Naive thymus-derived CD4-positive, alpha-beta T cell (primary cell): ENCODE measurements at regions of chr10 and their contacts with region 1.

Region 1: GRCh38 chr10:7410862-7411670 is at the start of gene SFMBT2:
- DNase-seq: peak; percentile 45 to 71 (median 64)
- ATAC-seq: peak; percentile 61
- H3K4me3 ChIP-seq: peak within 1 kb of the TSS; percentile 92
- H3K4me3 Mint-ChIP-seq: peak within 1 kb of the TSS; percentile 93 to 100 (median 99)
- H3K27ac ChIP-seq: peak within 1 kb of the TSS; percentile 76
- H3K27ac Mint-ChIP-seq: peak within 1 kb of the TSS; percentile 93 to 99 (median 95)
- H3K4me1 ChIP-seq: peaks cover 18 to 28% of the 10 kb centered on the region in 2 donors
- H3K4me1 Mint-ChIP-seq: peaks cover 14 to 49% (median 37%) of the 10 kb centered on the region in 7 donors
- H3K27me3 ChIP-seq: no peaks in the 10 kb centered on the region
- H3K27me3 Mint-ChIP-seq: peaks cover 0 to 34% (median 0%) of the 10 kb centered on the region in 5 donors
- total RNA-seq, gene SFMBT2: 38.6 to 50.9 (median 40.9) TPM

Region 2: GRCh38 chr10:6409971-6410651 is 1001.0 kb before region 1 on chr10:
- CTCF ChIA-PET with region 1: no interaction called
- POLR2A ChIA-PET with region 1: no interaction called
- intact Hi-C with region 1: loop called in 1 of 2 experiments (anchors 5 kb)
- DNase-seq: peak in 8 of 9 donors; percentile 20 to 64 (median 56)
- ATAC-seq: peak; percentile 95
- H3K4me3 ChIP-seq: peak overlapping the region; percentile 28
- H3K4me3 Mint-ChIP-seq: peak overlapping the region in 9 of 10 donors; percentile 43 to 75 (median 66)
- H3K27ac ChIP-seq: peak overlapping the region; percentile 55
- H3K27ac Mint-ChIP-seq: peak overlapping the region; percentile 83 to 97 (median 89)
- H3K4me1 ChIP-seq: peaks cover 11 to 25% of the 10 kb centered on the region in 2 donors
- H3K4me1 Mint-ChIP-seq: peaks cover 19 to 40% (median 34%) of the 10 kb centered on the region in 7 donors
- H3K27me3 ChIP-seq: no peaks in the 10 kb centered on the region
- H3K27me3 Mint-ChIP-seq: no peaks in the 10 kb centered on the region

Region 3: GRCh38 chr10:6929148-6929830 is 481.8 kb before region 1 on chr10:
- CTCF ChIA-PET with region 1: interaction called, 4 read pairs
- POLR2A ChIA-PET with region 1: no interaction called
- intact Hi-C with region 1: loop called in 1 of 2 experiments (anchors 2 kb)
- DNase-seq: no peak
- ATAC-seq: no peak
- H3K4me3 ChIP-seq: no peak overlapping the region
- H3K4me3 Mint-ChIP-seq: peak overlapping the region in 2 of 10 donors; percentile 1 to 35
- H3K27ac ChIP-seq: no peak overlapping the region
- H3K27ac Mint-ChIP-seq: peak overlapping the region in 2 of 9 donors; percentile 23 to 53
- H3K4me1 ChIP-seq: peaks cover 26 to 46% of the 10 kb centered on the region in 2 donors
- H3K4me1 Mint-ChIP-seq: peaks cover 25 to 46% (median 34%) of the 10 kb centered on the region in 7 donors
- H3K27me3 ChIP-seq: no peaks in the 10 kb centered on the region
- H3K27me3 Mint-ChIP-seq: peaks cover 0 to 10% (median 4%) of the 10 kb centered on the region in 5 donors

Region 4: GRCh38 chr10:7260412-7260900 is 150.6 kb before region 1 on chr10:
- CTCF ChIA-PET with region 1: interaction called, 6 read pairs
- POLR2A ChIA-PET with region 1: no interaction called
- intact Hi-C with region 1: loop called (anchors 1 to 2 kb)
- DNase-seq: peak in 3 of 9 donors; percentile 16 to 33 (median 31)
- ATAC-seq: peak; percentile 73
- H3K4me3 ChIP-seq: no peak overlapping the region
- H3K4me3 Mint-ChIP-seq: peak overlapping the region in 8 of 10 donors; percentile 29 to 75 (median 61)
- H3K27ac ChIP-seq: no peak overlapping the region
- H3K27ac Mint-ChIP-seq: peak overlapping the region; percentile 51 to 94 (median 86)
- H3K4me1 ChIP-seq: peaks cover 27 to 30% of the 10 kb centered on the region in 2 donors
- H3K4me1 Mint-ChIP-seq: peaks cover 42 to 64% (median 57%) of the 10 kb centered on the region in 7 donors
- H3K27me3 ChIP-seq: no peaks in the 10 kb centered on the region
- H3K27me3 Mint-ChIP-seq: no peaks in the 10 kb centered on the region

Region 5: GRCh38 chr10:7285522-7286322 is 125.3 kb before region 1 on chr10:
- CTCF ChIA-PET with region 1: no interaction called
- POLR2A ChIA-PET with region 1: no interaction called
- intact Hi-C with region 1: no loop called
- DNase-seq: no peak
- ATAC-seq: no peak
- H3K4me3 ChIP-seq: no peak overlapping the region
- H3K4me3 Mint-ChIP-seq: no peak overlapping the region
- H3K27ac ChIP-seq: no peak overlapping the region
- H3K27ac Mint-ChIP-seq: peak overlapping the region in 5 of 9 donors; percentile 1 to 51 (median 2)
- H3K4me1 ChIP-seq: no peaks in the 10 kb centered on the region
- H3K4me1 Mint-ChIP-seq: peaks cover 20 to 62% (median 54%) of the 10 kb centered on the region in 7 donors
- H3K27me3 ChIP-seq: no peaks in the 10 kb centered on the region
- H3K27me3 Mint-ChIP-seq: no peaks in the 10 kb centered on the region

Region 6: DNA sequence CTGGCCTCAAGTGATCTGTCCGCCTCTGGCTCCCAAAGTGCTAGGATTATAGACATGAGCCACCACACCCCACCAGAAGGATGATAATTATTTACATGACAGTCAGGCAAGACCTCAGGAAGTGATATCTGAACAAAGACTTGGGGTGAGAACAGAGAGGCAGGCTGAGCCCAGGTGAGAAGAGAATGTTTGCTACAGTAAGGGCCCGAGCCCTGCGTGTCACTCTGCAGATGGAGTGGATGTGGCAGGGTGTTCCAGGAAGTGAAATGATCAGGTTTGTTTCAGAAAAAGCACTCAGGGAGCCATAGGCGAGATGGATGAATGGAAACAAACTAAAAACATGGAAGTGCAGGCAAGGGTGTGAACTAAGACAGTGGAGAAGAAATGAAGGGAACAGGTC is 22.5 kb before region 1 on chr10:
- CTCF ChIA-PET with region 1: interaction called, 6 read pairs
- POLR2A ChIA-PET with region 1: interaction called, 8 read pairs
- intact Hi-C with region 1: loop called (anchors 1 to 2 kb)
- DNase-seq: peak in 7 of 9 donors; percentile 29 to 60 (median 41)
- ATAC-seq: peak; percentile 70
- H3K4me3 ChIP-seq: peak overlapping the region; percentile 6
- H3K4me3 Mint-ChIP-seq: peak overlapping the region; percentile 70 to 90 (median 80)
- H3K27ac ChIP-seq: peak overlapping the region; percentile 47
- H3K27ac Mint-ChIP-seq: peak overlapping the region; percentile 84 to 96 (median 91)
- H3K4me1 ChIP-seq: peaks cover 20 to 36% of the 10 kb centered on the region in 2 donors
- H3K4me1 Mint-ChIP-seq: peaks cover 46 to 94% (median 83%) of the 10 kb centered on the region in 7 donors
- H3K27me3 ChIP-seq: no peaks in the 10 kb centered on the region
- H3K27me3 Mint-ChIP-seq: no peaks in the 10 kb centered on the region

Region 7: DNA sequence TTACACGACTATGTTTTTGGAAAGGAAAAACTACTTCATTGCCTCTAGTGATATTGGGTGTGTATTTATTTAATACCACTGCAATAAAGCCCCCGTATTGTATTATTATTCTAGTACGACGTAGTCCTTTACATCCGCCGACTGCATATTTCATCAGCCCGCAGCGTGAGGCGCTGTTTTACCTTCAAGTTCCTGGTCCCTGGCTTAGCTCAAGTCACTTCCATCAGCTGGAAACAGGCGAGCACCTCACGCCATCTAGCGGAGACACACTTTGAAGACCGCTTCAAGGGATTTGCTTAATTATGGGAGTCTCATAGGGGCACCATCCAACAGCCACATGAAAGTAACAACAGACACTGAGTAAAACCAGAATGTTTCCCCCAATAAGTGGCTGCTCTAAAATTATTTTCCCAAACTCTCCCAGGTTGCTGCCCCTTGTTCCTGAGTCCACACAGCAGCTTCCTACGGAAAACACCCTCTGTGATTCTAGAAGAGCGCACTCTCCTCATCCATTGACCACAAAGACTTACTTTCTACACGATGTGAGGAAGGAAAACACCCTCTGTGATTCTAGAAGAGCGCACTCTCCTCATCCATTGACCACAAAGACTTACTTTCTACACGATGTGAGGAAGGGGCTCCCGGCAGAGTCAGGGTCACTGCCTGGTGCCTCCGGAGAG is 276.3 kb after region 1 on chr10:
- CTCF ChIA-PET with region 1: interaction called, 7 read pairs
- POLR2A ChIA-PET with region 1: no interaction called
- intact Hi-C with region 1: loop called (anchors 2 to 10 kb)
- DNase-seq: peak; percentile 30 to 82 (median 76)
- ATAC-seq: peak; percentile 96
- H3K4me3 ChIP-seq: no peak overlapping the region
- H3K4me3 Mint-ChIP-seq: peak overlapping the region in 1 of 10 donors; percentile 67
- H3K27ac ChIP-seq: no peak overlapping the region
- H3K27ac Mint-ChIP-seq: peak overlapping the region in 2 of 9 donors; percentile 15 to 28
- H3K4me1 ChIP-seq: no peaks in the 10 kb centered on the region
- H3K4me1 Mint-ChIP-seq: peaks cover 0 to 14% (median 4%) of the 10 kb centered on the region in 7 donors
- H3K27me3 ChIP-seq: no peaks in the 10 kb centered on the region
- H3K27me3 Mint-ChIP-seq: peaks cover 0 to 24% (median 0%) of the 10 kb centered on the region in 5 donors

Region 8: GRCh38 chr10:8245131-8245813 is 834.2 kb after region 1 on chr10:
- CTCF ChIA-PET with region 1: no interaction called
- POLR2A ChIA-PET with region 1: no interaction called
- intact Hi-C with region 1: no loop called
- DNase-seq: peak in 7 of 9 donors; percentile 45 to 75 (median 67)
- ATAC-seq: peak; percentile 86
- H3K4me3 ChIP-seq: no peak overlapping the region
- H3K4me3 Mint-ChIP-seq: peak overlapping the region; percentile 56 to 86 (median 78)
- H3K27ac ChIP-seq: peak overlapping the region; percentile 61
- H3K27ac Mint-ChIP-seq: peak overlapping the region; percentile 80 to 96 (median 91)
- H3K4me1 ChIP-seq: peaks cover 27 to 32% of the 10 kb centered on the region in 2 donors
- H3K4me1 Mint-ChIP-seq: peaks cover 20 to 79% (median 55%) of the 10 kb centered on the region in 7 donors
- H3K27me3 ChIP-seq: no peaks in the 10 kb centered on the region
- H3K27me3 Mint-ChIP-seq: no peaks in the 10 kb centered on the region

Region 9: DNA sequence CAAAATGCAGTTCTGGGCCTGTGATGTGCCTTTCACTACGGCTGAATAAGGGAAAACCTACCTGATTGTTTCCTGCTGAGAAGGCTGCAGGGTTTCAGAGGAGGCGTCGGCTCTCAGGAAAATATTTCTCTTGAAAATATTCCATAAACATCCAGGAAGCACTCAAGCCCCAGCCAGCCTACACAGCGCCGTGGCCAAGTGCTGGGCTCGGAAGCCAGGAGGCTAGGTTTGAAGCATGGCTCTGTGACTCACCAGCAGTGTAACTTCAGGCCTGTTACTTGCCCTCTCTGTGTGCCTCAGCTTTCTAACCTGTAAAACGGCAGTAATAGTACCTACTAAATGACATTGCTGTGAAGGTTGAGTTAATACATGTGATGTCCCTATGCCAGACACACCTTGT is 1042.5 kb after region 1 on chr10:
- CTCF ChIA-PET with region 1: no interaction called
- POLR2A ChIA-PET with region 1: no interaction called
- intact Hi-C with region 1: no loop called
- DNase-seq: no peak
- ATAC-seq: no peak
- H3K4me3 ChIP-seq: no peak overlapping the region
- H3K4me3 Mint-ChIP-seq: no peak overlapping the region
- H3K27ac ChIP-seq: no peak overlapping the region
- H3K27ac Mint-ChIP-seq: no peak overlapping the region
- H3K4me1 ChIP-seq: no peaks in the 10 kb centered on the region
- H3K4me1 Mint-ChIP-seq: peaks cover 0 to 5% (median 0%) of the 10 kb centered on the region in 7 donors
- H3K27me3 ChIP-seq: no peaks in the 10 kb centered on the region
- H3K27me3 Mint-ChIP-seq: peaks cover 0 to 26% (median 10%) of the 10 kb centered on the region in 5 donors